ENCODE measurements at regions of chr6 and their contacts with region 1.

Region 1: GRCh38 chr6:142913511-142914047 is 31.4 kb downstream of the HIVEP2 start:
- DNase-seq: peak; percentile 81
- H3K4me3 Mint-ChIP-seq: peak overlapping the region; percentile 75
- H3K27ac Mint-ChIP-seq: peak overlapping the region; percentile 99
- H3K4me1 Mint-ChIP-seq: peaks cover 67% of the 10 kb centered on the region
- H3K27me3 Mint-ChIP-seq: no peaks in the 10 kb centered on the region

Region 2: DNA sequence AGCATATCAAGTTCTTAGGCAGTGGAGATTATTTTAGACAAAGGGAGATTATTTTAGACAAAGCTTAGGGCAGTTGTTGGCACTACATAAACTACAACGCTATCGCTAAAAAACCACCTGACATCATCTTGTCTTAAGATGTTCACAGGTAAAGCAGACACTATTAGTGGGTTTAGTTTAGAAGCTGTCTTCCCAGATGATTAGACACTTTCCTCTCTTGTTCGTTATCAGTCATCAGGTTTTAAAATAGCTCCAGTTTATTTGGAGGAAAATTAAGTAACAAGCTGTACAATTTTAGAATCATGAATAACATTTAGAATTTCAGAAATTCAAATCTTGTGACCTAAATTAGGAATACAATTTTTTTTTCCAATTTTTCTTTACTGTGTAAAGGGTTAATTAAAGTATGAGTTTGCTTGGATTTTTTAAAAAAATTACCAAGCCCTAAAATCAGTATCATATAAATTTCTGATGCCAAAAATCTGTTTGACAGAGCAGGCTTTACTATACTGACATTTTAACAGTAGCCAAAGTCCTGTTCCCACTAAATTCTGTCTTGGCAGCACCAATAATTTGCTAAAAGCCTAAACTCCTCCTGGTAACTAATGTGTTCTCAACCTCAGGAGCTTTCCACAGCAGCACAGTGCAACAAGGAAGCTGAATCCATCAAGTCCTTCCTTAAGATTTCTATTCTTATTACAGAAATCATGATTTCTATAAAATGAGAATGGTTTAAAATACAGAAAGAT is 77.6 kb before region 1 on chr6:
- CTCF ChIA-PET with region 1: no interaction called
- POLR2A ChIA-PET with region 1: no interaction called
- DNase-seq: no peak
- H3K4me3 Mint-ChIP-seq: no peak overlapping the region
- H3K27ac Mint-ChIP-seq: no peak overlapping the region
- H3K4me1 Mint-ChIP-seq: peaks cover 49% of the 10 kb centered on the region
- H3K27me3 Mint-ChIP-seq: no peaks in the 10 kb centered on the region

Region 3: GRCh38 chr6:142926494-142927270 is 13.1 kb after region 1 on chr6:
- CTCF ChIA-PET with region 1: interaction called, 7 read pairs
- POLR2A ChIA-PET with region 1: interaction called, 81 read pairs
- DNase-seq: peak; percentile 82
- H3K4me3 Mint-ChIP-seq: peak overlapping the region; percentile 84
- H3K27ac Mint-ChIP-seq: peak overlapping the region; percentile 87
- H3K4me1 Mint-ChIP-seq: peaks cover 42% of the 10 kb centered on the region
- H3K27me3 Mint-ChIP-seq: no peaks in the 10 kb centered on the region

Region 4: GRCh38 chr6:143060354-143060805 is 146.8 kb after region 1 on chr6:
- CTCF ChIA-PET with region 1: no interaction called
- POLR2A ChIA-PET with region 1: no interaction called
- DNase-seq: peak; percentile 80
- H3K4me3 Mint-ChIP-seq: peak overlapping the region; percentile 86
- H3K27ac Mint-ChIP-seq: peak overlapping the region; percentile 82
- H3K4me1 Mint-ChIP-seq: peaks cover 27% of the 10 kb centered on the region
- H3K27me3 Mint-ChIP-seq: no peaks in the 10 kb centered on the region